ENCODE measurements at regions of chr6 and their contacts with region 1.

Region 1: DNA sequence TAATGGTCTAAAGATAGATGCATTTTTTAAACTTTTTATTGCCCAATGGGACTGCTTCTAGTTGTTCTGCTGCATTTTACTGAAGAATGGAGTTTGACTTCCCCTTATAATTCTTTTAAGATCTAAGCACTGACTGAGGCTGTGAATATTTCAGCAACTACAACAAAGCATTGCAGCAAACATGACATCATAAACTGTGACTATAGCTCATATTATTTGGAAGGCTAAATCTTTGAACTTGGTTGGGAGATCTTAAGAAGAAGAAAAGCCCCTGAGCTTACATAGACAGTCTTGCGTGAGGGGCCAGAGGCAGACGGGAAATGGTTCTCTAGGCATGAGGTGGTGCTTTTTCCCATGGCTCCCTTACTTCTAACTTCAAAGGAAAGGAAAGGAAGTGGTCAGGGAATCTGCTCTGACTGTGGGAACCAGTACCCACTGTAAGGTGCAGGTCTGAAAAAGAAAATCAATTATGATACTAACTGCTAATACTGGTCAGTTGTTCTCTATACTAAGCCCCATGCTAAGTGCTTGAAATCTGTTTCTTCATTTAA is 14.8 kb downstream of the HEY2 start:
- DNase-seq: no peak
- ATAC-seq: no peak
- H3K4me3 ChIP-seq: no peak overlapping the region
- H3K27ac ChIP-seq: peak overlapping the region in 2 of 10 donors; percentile 10 to 19
- H3K4me1 ChIP-seq: peaks cover 0 to 49% (median 9%) of the 10 kb centered on the region in 9 donors
- H3K27me3 ChIP-seq: peaks cover 0 to 11% (median 0%) of the 10 kb centered on the region in 7 donors
- CTCF ChIP-seq: no peak

Region 2: DNA sequence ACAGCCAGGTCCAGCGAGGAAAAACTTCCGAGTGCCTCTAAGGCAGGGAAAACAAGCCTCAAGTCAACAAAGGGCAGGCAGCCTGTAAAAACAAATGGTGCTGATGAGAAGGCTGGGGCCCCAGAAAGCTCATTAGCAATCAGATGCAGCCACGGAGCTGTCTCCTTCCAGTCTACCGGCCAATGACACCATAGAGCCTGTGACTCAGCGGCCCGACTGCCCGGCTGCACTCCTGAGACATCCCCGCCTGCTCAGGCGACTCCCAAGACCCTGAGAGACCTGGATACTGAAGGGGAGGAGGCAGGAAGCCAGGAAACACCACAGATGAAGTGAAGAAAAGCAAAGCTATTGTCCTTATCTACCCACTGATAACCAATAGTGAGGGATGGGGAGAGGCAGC is 342.3 kb before region 1 on chr6:
- intact Hi-C with region 1: loop called in 1 of 10 experiments (anchors 10 kb)
- DNase-seq: peak; percentile 16 to 27
- ATAC-seq: peak in 7 of 8 donors; percentile 43 to 82 (median 72)
- H3K4me3 ChIP-seq: no peak overlapping the region
- H3K27ac ChIP-seq: peak overlapping the region in 2 of 10 donors; percentile 41 to 58
- H3K4me1 ChIP-seq: peaks cover 0 to 9% (median 0%) of the 10 kb centered on the region in 9 donors
- H3K27me3 ChIP-seq: no peaks in the 10 kb centered on the region
- CTCF ChIP-seq: no peak

Region 3: DNA sequence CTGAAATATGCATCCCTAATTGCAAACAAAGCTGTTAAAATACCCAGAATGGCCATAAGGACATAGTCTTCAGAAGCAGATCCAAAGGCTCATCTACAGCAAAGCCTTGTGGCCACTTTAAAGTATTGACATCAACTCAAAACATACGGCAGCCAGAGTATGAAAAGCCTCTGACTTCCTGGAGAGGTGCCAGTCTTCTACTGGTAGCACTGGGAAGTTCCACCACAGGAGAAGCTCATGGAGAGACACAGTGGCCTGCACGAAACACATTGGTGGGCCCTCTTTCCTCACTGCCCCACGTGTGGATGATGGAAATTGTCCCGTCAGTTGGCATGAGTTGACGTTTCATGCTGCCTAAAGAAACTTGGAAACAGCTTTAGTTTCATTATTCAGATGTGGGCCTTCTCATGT is 217.3 kb before region 1 on chr6:
- intact Hi-C with region 1: no loop called
- DNase-seq: no peak
- ATAC-seq: peak in 3 of 8 donors; percentile 42 to 74 (median 57)
- H3K4me3 ChIP-seq: no peak overlapping the region
- H3K27ac ChIP-seq: no peak overlapping the region
- H3K4me1 ChIP-seq: peaks cover 0 to 9% (median 0%) of the 10 kb centered on the region in 9 donors
- H3K27me3 ChIP-seq: no peaks in the 10 kb centered on the region
- CTCF ChIP-seq: peak in 2 of 9 donors; percentile 27 to 29